ENCODE measurements at regions of chr9 and their contacts with region 1.

Region 1: DNA sequence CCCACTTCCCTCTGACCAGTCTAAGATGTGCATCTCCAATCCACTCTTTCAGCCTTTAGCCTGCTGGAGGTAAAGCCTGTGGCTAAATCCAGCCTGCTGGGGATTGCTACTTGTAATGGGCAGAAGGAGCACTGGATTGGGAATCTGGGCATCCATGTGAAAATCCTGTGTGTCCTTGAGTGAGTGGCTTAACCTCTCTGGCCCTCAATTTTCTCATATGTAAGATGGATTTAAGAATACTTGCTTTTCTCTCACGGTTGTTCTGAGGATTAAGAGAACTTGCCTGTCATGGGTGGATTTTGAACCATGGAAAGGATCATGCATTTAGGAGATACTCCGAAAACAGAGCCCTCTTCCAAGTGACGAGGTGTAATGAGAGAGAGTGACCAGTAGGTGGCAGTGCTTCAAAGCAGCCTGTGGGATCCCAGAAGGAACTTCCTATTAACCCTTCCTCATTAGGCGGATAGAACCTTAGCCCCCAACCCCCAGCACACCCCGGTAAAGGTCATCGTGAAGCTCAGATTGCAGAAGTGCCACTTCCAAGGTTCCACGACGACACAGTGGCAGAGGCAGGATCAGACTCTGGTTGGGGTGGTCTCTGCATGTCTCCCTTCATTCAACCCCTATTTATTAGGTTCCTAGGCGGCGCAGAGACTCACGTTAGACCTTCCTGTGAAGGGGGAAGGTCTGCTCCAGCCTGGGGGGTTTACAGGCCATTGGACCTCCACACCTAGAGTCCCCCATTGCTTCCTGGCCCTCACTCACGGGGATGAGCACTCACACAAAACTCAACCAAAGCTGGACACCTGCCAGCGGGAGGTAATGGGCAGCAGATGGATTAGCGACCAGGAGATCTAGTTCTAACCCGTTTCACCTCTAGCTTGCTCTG is 68.7 kb upstream of the ZNF618 start:
- DNase-seq: peak; percentile 56 to 57
- H3K4me3 ChIP-seq: no peak overlapping the region
- H3K27ac ChIP-seq: no peak overlapping the region
- H3K4me1 ChIP-seq: no peaks in the 10 kb centered on the region
- H3K27me3 ChIP-seq: no peaks in the 10 kb centered on the region
- CTCF ChIP-seq: peak; percentile 85 to 93 (median 86)
- POLR2A ChIP-seq: no peak

Region 2: GRCh38 chr9:113508111-113508749 is 299.2 kb before region 1 on chr9:
- intact Hi-C with region 1: no loop called
- DNase-seq: no peak
- H3K4me3 ChIP-seq: no peak overlapping the region
- H3K27ac ChIP-seq: no peak overlapping the region
- H3K4me1 ChIP-seq: no peaks in the 10 kb centered on the region
- H3K27me3 ChIP-seq: no peaks in the 10 kb centered on the region
- CTCF ChIP-seq: no peak
- POLR2A ChIP-seq: no peak

Region 3: DNA sequence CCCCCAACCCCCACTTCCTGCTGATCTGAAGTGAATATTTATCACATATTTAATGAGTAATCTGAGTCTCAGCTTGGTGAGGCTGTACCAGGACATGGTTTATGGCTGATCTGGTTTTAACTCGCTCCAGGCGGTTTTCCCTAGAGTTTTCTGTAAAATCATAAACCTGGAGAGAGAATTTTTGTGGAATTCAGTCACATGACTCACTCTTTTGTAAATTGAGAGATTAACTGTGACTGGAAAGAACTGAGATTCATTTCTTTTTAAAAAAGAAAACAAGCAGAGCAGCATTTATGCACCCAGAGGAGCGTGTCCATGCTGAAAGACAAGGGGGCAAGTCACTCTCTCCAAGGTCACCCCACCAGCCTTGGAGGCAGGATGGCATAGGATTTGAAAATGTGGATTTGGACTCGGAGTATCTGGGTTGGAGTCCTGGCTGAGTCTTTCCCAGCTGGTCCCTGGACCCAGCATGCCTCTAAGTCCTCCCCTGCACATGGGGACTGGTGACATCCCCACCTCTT is 150.5 kb after region 1 on chr9:
- intact Hi-C with region 1: no loop called
- DNase-seq: no peak
- H3K4me3 ChIP-seq: no peak overlapping the region
- H3K27ac ChIP-seq: peak overlapping the region; percentile 10 to 12
- H3K4me1 ChIP-seq: no peaks in the 10 kb centered on the region
- H3K27me3 ChIP-seq: no peaks in the 10 kb centered on the region
- CTCF ChIP-seq: no peak
- POLR2A ChIP-seq: no peak

Region 4: DNA sequence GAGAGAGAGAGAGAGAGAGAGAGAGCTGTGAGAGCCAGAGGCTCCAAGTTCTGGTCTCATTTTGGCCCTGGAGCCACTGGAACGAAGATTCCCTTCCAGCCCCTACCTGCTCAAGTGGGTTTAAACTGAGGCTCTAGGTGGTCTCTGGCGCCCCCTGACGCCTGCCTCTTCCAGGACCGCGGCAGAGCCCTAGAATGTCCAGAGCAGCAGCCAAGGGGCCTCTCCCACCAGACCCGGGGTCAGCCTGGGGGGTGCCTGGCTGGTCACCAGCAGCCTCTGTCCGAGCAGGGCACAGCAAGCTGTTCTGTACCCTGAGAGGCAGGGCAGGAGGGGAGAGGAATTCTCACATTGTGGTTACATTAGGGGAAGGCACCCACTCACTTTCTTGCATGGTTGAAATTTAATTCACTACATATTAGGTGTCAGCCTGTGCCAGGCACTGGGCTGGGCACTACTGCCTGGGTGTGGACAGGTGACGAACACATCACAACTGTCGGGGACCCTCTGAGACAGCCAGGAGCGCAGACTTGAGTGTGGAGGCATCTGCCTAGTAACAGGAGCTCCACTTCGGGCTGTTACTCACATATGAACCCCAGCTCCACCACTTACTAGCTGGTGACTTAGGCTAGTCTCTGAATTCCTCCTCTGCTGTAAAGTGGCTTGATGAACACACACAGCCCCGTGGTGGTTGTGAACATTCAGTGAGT is 226.1 kb after region 1 on chr9:
- intact Hi-C with region 1: loop called (anchors 10 kb)
- DNase-seq: peak; percentile 26 to 44
- H3K4me3 ChIP-seq: no peak overlapping the region
- H3K27ac ChIP-seq: no peak overlapping the region
- H3K4me1 ChIP-seq: no peaks in the 10 kb centered on the region
- H3K27me3 ChIP-seq: no peaks in the 10 kb centered on the region
- CTCF ChIP-seq: peak; percentile 41 to 51 (median 49)
- POLR2A ChIP-seq: no peak

Measured in uterus (tissue), 4 donors.